ENCODE measurements at regions of chr1 and their contacts with region 1.

Region 1: DNA sequence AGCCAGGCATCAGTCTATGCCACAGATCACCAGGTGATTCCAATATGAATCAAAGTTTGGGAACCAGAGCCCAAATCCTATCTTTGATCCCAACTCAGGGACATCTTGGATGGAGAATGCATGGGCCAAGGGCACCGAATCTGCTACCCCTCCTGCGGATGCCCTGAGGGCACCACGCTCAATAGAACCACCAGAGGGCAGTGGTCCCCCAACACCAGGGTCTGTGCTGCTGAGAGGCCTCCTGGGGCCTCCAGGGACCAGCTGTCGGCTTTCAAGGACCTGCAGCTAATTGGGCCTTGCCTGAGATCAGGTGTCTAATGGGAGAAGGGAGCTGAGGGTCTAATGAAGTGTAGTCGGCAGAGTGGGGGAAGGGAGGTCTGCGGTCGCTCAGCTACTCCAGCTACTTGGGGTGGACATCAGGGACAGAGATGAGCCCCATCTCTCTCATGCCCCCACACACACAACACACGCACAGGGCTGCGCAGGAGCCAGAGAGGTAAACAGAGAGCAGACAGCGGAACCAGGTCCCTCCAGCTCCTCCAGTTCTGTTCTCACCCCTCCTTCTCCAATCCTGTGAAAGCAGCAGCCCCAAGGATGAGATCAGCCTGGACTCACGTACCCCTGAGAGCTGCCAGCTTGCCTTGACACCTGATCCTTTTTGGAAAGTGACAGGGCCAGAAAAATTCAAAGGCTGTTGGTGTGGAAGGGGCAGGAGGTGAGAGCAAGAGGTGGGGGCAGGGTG is 34.9 kb upstream of the PPP1R15B start:
- DNase-seq: peak; percentile 81 to 85 (median 84)
- ATAC-seq: peak; percentile 86
- H3K4me3 ChIP-seq: no peak overlapping the region
- H3K27ac ChIP-seq: peak overlapping the region in 2 of 4 donors; percentile 5 to 25
- H3K4me1 ChIP-seq: peaks cover 25% of the 10 kb centered on the region
- H3K27me3 ChIP-seq: no peaks in the 10 kb centered on the region
- CTCF ChIP-seq: peak; percentile 77 to 88 (median 79)
- POLR2A ChIP-seq: no peak

Region 2: DNA sequence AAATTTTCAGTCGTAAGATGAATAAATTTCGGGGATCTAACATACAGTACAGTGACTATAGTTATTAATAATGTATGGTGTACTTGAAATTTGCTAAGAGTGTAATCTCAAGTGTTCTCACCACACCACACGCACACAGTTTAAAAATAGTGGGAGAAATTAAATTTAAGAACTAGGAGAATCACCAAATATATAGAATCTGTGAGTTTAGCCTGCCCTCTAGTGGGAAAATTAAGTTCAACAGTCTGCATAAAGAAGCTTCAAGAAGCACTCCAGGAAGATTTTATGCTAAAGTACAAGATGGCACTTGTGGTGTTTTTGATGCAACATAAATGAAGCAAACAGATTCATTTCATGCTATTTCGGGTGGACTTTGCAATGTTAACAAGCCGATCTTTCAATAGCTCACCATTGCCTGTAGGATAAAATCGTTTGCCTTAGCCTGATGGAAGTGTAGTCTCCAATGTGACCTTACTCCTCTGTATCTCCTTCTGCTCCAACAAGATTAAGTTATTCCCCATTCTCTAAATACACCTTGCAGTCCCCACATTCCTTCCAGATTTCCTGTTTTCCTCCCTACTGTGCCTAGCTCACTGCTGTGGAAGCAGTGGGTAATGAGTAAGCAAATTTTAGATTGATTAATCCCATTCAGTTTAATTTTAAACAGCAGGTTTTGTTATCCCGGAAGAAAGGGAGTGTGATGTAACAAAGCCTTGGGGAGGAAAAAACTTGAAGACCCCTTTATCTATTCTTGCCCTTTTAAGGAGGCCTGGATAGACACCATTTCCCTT is 56.8 kb after region 1 on chr1:
- intact Hi-C with region 1: loop called (anchors 5 kb)
- DNase-seq: peak in 1 of 4 donors; percentile 65
- ATAC-seq: peak; percentile 41
- H3K4me3 ChIP-seq: no peak overlapping the region
- H3K27ac ChIP-seq: peak overlapping the region in 3 of 4 donors; percentile 31 to 88 (median 32)
- H3K4me1 ChIP-seq: peaks cover 32% of the 10 kb centered on the region
- H3K27me3 ChIP-seq: no peaks in the 10 kb centered on the region
- CTCF ChIP-seq: peak; percentile 57 to 92 (median 83)
- POLR2A ChIP-seq: no peak

Region 3: GRCh38 chr1:204902671-204903070 is 456.1 kb after region 1 on chr1:
- intact Hi-C with region 1: no loop called
- DNase-seq: no peak
- ATAC-seq: no peak
- H3K4me3 ChIP-seq: no peak overlapping the region
- H3K27ac ChIP-seq: no peak overlapping the region
- H3K4me1 ChIP-seq: no peaks in the 10 kb centered on the region
- H3K27me3 ChIP-seq: no peaks in the 10 kb centered on the region
- CTCF ChIP-seq: no peak
- POLR2A ChIP-seq: no peak